Gastrocnemius medialis (tissue), 4 donors: ENCODE measurements at regions of chr6 and their contacts with region 1.

Region 1: GRCh38 chr6:34986845-34987246 is 97.8 kb downstream of the ANKS1A start:
- DNase-seq: peak; percentile 53 to 59
- ATAC-seq: peak; percentile 76 to 89
- H3K4me3 ChIP-seq: no peak overlapping the region
- H3K27ac ChIP-seq: no peak overlapping the region
- H3K4me1 ChIP-seq: peaks cover 5 to 6% of the 10 kb centered on the region in 2 donors
- H3K27me3 ChIP-seq: no peaks in the 10 kb centered on the region
- CTCF ChIP-seq: peak; percentile 79 to 90 (median 88)
- POLR2A ChIP-seq: no peak

Region 2: GRCh38 chr6:35128496-35128895 is 141.7 kb after region 1 on chr6:
- in situ Hi-C with region 1: loop called in 2 of 4 experiments (anchors 5 kb)
- intact Hi-C with region 1: no loop called
- DNase-seq: no peak
- ATAC-seq: no peak
- H3K4me3 ChIP-seq: no peak overlapping the region
- H3K27ac ChIP-seq: no peak overlapping the region
- H3K4me1 ChIP-seq: no peaks in the 10 kb centered on the region
- H3K27me3 ChIP-seq: no peaks in the 10 kb centered on the region
- CTCF ChIP-seq: no peak
- POLR2A ChIP-seq: no peak

Region 3: DNA sequence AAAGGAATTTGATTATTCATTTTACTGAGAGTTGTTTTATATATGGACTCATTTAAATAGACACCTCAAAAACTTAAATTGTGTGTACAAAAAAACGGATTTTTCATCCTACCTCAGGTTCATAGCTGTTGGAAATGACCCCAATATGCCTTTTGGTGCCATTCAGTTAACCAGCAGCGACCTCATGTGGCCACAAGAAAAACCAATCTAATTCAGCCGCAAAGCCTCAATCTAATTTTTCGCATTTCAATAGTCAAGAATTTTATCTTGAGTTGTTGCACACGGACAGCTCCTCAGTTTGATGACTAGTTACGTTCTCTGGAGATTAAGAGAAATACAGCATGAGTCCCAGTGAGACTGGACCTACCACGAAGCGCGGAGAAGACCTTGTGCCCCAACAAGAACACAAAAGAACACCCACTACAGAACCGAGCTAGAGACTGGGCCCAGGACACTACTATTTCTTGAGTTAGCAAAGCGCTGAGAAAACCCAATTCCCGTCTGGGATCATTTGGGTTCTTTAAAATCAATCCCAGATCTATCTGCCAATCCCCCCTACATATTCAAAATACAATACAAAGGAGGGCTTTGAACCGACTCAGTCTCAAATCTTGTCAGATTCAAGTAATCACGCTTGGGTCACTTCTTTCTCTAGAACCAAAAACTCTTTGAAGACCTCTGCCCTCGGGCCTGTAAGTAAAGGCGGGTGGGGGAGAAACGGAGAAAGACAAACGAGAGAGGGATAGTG is 153.2 kb after region 1 on chr6:
- in situ Hi-C with region 1: loop called in 2 of 4 experiments (anchors 5 kb)
- intact Hi-C with region 1: loop called (anchors 1 kb)
- DNase-seq: peak in 1 of 2 donors; percentile 17
- ATAC-seq: peak in 1 of 2 donors; percentile 49
- H3K4me3 ChIP-seq: no peak overlapping the region
- H3K27ac ChIP-seq: no peak overlapping the region
- H3K4me1 ChIP-seq: peaks cover 0 to 4% of the 10 kb centered on the region in 2 donors
- H3K27me3 ChIP-seq: peaks cover 6 to 7% (median 6%) of the 10 kb centered on the region in 3 donors
- CTCF ChIP-seq: peak; percentile 76 to 89 (median 82)
- POLR2A ChIP-seq: no peak

Region 4: DNA sequence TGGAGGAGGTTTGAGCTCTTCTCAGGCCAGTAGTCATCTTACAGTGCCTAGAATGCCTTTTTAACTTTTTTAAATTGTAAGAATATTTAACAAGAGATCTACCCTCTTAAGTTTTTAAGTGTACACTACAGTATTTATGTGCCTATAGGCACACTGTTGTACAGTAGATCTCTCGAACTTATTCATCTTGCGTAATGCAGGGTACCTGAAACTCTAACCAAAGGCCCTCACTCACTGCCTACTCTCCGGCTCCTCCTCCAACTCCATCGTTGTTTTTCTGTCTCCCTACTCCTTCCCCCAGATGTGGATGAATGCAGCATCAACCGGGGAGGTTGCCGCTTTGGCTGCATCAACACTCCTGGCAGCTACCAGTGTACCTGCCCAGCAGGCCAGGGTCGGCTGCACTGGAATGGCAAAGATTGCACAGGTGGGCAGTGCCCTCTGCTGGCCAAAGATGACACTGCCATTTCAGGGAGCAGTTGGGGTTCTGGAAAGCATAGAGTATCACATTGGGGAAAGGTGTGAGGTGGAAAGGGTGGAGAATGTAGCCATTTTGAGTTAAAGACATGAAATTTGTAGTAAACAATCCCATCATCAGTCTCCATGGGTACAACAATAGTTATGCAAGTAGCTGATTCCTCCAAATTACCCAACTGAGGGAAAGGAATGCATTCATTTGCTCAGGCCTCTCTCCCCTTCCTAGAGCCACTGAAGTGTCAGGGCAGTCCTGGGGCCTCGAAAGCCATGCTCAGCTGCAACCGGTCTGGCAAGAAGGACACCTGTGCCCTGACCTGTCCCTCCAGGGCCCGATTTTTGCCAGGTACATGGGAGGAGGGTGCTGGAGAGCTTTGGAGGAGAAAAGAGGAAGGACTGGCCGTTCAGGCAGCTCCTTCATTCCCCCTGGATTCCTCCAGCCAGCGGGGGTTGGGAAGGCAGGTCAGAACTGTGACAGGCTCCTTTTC is 254.3 kb after region 1 on chr6:
- in situ Hi-C with region 1: loop called in 2 of 4 experiments (anchors 25 kb)
- intact Hi-C with region 1: loop called (anchors 2 kb)
- DNase-seq: peak in 1 of 2 donors; percentile 45
- ATAC-seq: peak; percentile 59 to 83
- H3K4me3 ChIP-seq: no peak overlapping the region
- H3K27ac ChIP-seq: no peak overlapping the region
- H3K4me1 ChIP-seq: peaks cover 0 to 3% of the 10 kb centered on the region in 2 donors
- H3K27me3 ChIP-seq: no peaks in the 10 kb centered on the region
- CTCF ChIP-seq: peak; percentile 82 to 92 (median 86)
- POLR2A ChIP-seq: no peak